ENCODE measurements at regions of chr14 and their contacts with region 1.

Region 1: GRCh38 chr14:41901089-41901488 is 294.4 kb downstream of the LRFN5 start:
- DNase-seq: no peak
- ATAC-seq: no peak
- H3K4me3 ChIP-seq: no peak overlapping the region
- H3K4me3 Mint-ChIP-seq: no peak overlapping the region
- H3K27ac ChIP-seq: no peak overlapping the region
- H3K27ac Mint-ChIP-seq: no peak overlapping the region
- H3K4me1 ChIP-seq: no peaks in the 10 kb centered on the region
- H3K4me1 Mint-ChIP-seq: no peaks in the 10 kb centered on the region
- H3K27me3 ChIP-seq: no peaks in the 10 kb centered on the region
- H3K27me3 Mint-ChIP-seq: no peaks in the 10 kb centered on the region

Region 2: DNA sequence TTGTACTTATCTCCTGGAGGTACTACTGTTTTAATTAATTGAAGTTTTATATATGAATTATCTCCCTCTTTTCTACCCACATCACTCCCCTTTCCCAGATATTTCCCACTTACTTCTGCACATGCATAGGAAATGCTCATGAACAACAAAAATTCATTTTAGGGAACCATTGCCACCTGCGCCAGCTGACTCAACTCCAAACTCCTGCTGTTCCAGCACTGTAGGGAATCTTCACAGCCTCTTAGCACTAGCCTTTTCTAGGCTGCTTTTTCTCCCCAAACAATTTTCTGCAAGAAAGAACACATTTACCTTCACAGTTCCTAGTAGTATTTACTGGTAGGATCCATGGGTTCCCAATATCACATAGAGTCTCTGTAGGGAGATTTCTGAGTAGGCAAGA is 26.0 kb before region 1 on chr14:
- CTCF ChIA-PET with region 1: no interaction called
- POLR2A ChIA-PET with region 1: interaction called in 1 of 2 experiments, 10 read pairs
- DNase-seq: no peak
- ATAC-seq: no peak
- H3K4me3 ChIP-seq: no peak overlapping the region
- H3K4me3 Mint-ChIP-seq: no peak overlapping the region
- H3K27ac ChIP-seq: no peak overlapping the region
- H3K27ac Mint-ChIP-seq: no peak overlapping the region
- H3K4me1 ChIP-seq: no peaks in the 10 kb centered on the region
- H3K4me1 Mint-ChIP-seq: no peaks in the 10 kb centered on the region
- H3K27me3 ChIP-seq: no peaks in the 10 kb centered on the region
- H3K27me3 Mint-ChIP-seq: no peaks in the 10 kb centered on the region

Measured in T-cell (primary cell).